CD4-positive, alpha-beta T cell (primary cell): ENCODE measurements at regions of chr9 and their contacts with region 1.

Region 1: GRCh38 chr9:78806492-78807160 is 509.7 kb downstream of the PSAT1 start:
- DNase-seq: no peak
- ATAC-seq: no peak
- H3K4me3 ChIP-seq: no peak overlapping the region
- H3K4me3 Mint-ChIP-seq: no peak overlapping the region
- H3K27ac ChIP-seq: no peak overlapping the region
- H3K27ac Mint-ChIP-seq: no peak overlapping the region
- H3K4me1 ChIP-seq: no peaks in the 10 kb centered on the region
- H3K4me1 Mint-ChIP-seq: no peaks in the 10 kb centered on the region
- H3K27me3 ChIP-seq: no peaks in the 10 kb centered on the region
- H3K27me3 Mint-ChIP-seq: peaks cover 5% of the 10 kb centered on the region
- CTCF ChIP-seq: no peak

Region 2: GRCh38 chr9:78866207-78867132 is 59.8 kb after region 1 on chr9:
- CTCF ChIA-PET with region 1: no interaction called
- POLR2A ChIA-PET with region 1: no interaction called
- intact Hi-C with region 1: loop called in 1 of 2 experiments (anchors 10 kb)
- DNase-seq: no peak
- ATAC-seq: no peak
- H3K4me3 ChIP-seq: no peak overlapping the region
- H3K4me3 Mint-ChIP-seq: no peak overlapping the region
- H3K27ac ChIP-seq: no peak overlapping the region
- H3K27ac Mint-ChIP-seq: no peak overlapping the region
- H3K4me1 ChIP-seq: no peaks in the 10 kb centered on the region
- H3K4me1 Mint-ChIP-seq: no peaks in the 10 kb centered on the region
- H3K27me3 ChIP-seq: no peaks in the 10 kb centered on the region
- H3K27me3 Mint-ChIP-seq: no peaks in the 10 kb centered on the region
- CTCF ChIP-seq: no peak